Ovary (tissue), 10 donors: ENCODE measurements at regions of chr17 and their contacts with region 1.

Region 1: DNA sequence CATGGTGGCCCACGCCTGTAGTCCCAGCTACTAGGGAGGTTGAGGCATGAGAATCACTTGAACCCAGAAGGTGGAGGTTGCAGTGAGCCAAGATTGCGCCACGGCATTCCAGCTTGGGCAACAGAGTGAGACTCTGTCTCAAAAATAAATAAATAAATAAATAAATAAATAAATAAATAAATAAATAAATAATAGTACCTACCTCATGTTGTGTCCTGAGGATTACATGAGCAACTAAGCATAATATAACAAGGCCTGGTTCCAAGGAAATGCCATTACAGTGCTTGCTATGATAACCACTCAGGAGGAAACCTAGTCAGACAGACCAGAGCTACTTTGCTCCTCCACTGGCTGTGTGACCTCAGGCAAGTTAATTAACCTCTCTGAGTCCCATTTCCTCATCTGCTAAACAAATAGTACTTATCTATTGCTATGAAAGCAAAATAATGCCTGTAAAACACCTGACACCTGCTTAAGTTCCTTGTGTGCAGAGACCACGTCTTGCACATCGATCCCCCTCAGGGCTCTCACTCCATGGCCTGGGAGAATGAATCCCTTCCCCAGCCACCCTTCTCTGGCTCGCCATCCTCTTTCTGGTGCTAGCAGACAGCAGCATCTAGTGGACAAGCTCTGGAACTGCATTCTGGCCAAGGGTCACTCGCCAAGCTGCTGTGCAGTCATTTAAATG is 7.5 kb downstream of the EPOP start:
- DNase-seq: peak; percentile 51 to 65 (median 62)
- H3K4me3 ChIP-seq: no peak overlapping the region
- H3K27ac ChIP-seq: no peak overlapping the region
- H3K4me1 ChIP-seq: no peaks in the 10 kb centered on the region
- H3K27me3 ChIP-seq: no peaks in the 10 kb centered on the region
- CTCF ChIP-seq: peak; percentile 73 to 93 (median 91)
- EP300 ChIP-seq: no peak
- POLR2A ChIP-seq: no peak

Region 2: DNA sequence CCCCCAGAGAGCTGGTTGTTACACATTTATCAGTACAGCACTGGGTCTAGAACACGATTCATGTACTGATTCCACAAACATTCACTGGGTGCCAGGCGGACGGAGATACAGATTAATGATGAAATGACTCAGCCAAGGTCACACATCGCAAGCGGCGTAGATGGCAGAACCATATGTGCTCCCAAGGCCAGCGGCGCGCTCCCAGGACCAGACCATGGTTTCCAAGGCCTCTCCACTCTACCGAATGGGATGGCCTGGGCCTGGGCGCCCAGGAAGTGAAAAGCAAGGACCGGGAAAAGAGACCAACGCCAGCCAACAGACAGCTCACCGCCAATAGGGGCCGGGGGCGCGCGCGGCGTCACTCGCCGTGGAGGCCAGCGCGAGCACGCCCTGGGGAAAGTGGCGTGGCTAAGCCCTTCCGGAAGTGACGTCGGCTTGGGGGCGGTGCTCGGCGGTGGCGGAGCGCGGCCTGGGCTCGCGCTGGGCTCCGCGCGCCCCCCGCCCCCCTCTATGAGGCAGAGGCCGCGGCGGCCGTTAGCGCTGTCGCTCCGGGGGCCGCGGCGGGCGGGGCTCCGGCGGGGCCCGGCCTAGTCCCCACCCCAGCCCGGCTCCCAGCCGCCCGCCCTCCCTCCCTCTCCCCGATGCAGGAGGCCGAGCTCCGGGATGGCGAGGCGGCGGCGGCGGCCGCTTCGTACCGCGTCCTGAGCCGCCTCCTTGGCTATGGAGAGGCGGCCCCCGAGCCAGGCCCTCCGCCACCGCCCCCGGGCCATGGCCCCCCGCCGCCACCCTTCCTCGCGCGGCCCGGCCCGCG is 315.6 kb before region 1 on chr17 and contains the start of gene SOCS7:
- intact Hi-C with region 1: loop called in 1 of 4 experiments (anchors 10 kb)
- DNase-seq: peak; percentile 95 to 97 (median 97)
- H3K4me3 ChIP-seq: peak within 1 kb of the TSS; percentile 64
- H3K27ac ChIP-seq: peak within 1 kb of the TSS; percentile 40 to 75
- H3K4me1 ChIP-seq: peaks cover 11% of the 10 kb centered on the region
- H3K27me3 ChIP-seq: no peaks in the 10 kb centered on the region
- CTCF ChIP-seq: no peak
- EP300 ChIP-seq: no peak
- POLR2A ChIP-seq: peak; percentile 79
- total RNA-seq, gene SOCS7: 12.8 to 23.8 (median 21.1) TPM

Region 3: DNA sequence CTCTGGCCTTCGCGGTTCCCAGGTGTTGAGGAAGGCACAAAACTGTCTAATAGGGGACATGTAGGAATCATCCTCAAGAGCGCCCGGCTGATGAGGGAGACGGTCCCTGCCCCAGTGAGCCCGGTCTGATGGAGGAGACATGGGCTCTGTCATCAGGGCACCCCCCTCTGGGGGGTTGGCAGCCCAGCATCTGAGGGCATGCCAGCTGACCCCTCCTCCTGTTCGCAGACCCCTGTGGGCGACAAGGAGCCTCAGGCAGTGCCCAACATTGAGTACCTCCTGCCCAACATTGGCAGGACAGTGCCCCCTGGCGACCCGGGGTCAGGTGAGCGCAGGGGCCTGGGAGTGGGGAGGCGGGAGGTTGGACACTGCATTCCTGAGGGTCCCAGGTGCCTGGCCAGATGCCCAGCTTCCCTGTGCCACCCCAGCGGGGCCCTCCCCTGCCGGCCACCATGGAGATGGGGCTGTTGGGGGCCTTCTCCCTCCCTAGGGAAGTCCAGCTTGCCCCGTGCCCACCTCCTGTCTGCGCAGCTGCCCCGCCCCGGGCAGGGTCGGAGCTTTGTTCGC is 169.0 kb before region 1 on chr17:
- intact Hi-C with region 1: loop called in 3 of 4 experiments (anchors 10 kb)
- DNase-seq: peak in 1 of 5 donors; percentile 34
- H3K4me3 ChIP-seq: no peak overlapping the region
- H3K27ac ChIP-seq: no peak overlapping the region
- H3K4me1 ChIP-seq: no peaks in the 10 kb centered on the region
- H3K27me3 ChIP-seq: no peaks in the 10 kb centered on the region
- CTCF ChIP-seq: no peak
- EP300 ChIP-seq: no peak
- POLR2A ChIP-seq: no peak

Region 4: DNA sequence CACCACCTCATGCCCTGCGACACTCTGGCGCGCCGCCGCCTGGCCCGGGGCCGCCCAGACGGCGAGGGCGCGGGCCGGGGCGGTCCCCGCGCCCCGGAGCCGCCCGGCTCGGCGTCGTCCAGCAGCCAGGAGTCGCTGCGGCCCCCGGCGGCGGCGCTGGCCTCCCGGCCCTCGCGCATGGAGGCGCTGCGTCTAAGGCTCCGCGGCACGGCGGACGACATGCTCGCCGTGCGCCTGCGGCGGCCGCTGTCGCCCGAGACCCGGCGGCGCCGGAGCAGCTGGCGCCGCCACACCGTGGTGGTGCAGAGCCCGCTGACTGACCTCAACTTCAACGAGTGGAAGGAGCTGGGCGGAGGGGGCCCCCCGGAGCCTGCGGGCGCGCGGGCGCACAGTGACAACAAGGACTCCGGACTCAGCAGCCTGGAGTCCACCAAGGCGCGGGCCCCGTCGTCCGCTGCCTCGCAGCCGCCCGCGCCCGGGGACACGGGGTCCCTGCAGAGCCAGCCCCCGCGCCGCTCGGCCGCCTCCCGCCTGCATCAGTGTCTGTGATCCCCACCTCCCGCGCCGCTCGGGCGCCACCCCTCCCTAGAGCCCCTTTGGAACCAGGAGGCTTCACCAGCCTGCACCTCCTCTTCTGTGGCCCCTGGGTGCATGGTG is 156.7 kb before region 1 on chr17:
- intact Hi-C with region 1: loop called in 1 of 4 experiments (anchors 10 kb)
- DNase-seq: peak in 2 of 5 donors; percentile 54 to 56
- H3K4me3 ChIP-seq: no peak overlapping the region
- H3K27ac ChIP-seq: no peak overlapping the region
- H3K4me1 ChIP-seq: peaks cover 7% of the 10 kb centered on the region
- H3K27me3 ChIP-seq: no peaks in the 10 kb centered on the region
- CTCF ChIP-seq: no peak
- EP300 ChIP-seq: no peak
- POLR2A ChIP-seq: no peak

Region 5: GRCh38 chr17:38557836-38558727 is 109.2 kb before region 1 on chr17:
- intact Hi-C with region 1: loop called in 3 of 4 experiments (anchors 2 to 5 kb)
- DNase-seq: peak; percentile 91 to 96 (median 92)
- H3K4me3 ChIP-seq: peak overlapping the region; percentile 35
- H3K27ac ChIP-seq: peak overlapping the region; percentile 28 to 52
- H3K4me1 ChIP-seq: peaks cover 8% of the 10 kb centered on the region
- H3K27me3 ChIP-seq: peaks cover 3% of the 10 kb centered on the region
- CTCF ChIP-seq: peak; percentile 90 to 95 (median 95)
- EP300 ChIP-seq: no peak
- POLR2A ChIP-seq: peak; percentile 32

Region 6: DNA sequence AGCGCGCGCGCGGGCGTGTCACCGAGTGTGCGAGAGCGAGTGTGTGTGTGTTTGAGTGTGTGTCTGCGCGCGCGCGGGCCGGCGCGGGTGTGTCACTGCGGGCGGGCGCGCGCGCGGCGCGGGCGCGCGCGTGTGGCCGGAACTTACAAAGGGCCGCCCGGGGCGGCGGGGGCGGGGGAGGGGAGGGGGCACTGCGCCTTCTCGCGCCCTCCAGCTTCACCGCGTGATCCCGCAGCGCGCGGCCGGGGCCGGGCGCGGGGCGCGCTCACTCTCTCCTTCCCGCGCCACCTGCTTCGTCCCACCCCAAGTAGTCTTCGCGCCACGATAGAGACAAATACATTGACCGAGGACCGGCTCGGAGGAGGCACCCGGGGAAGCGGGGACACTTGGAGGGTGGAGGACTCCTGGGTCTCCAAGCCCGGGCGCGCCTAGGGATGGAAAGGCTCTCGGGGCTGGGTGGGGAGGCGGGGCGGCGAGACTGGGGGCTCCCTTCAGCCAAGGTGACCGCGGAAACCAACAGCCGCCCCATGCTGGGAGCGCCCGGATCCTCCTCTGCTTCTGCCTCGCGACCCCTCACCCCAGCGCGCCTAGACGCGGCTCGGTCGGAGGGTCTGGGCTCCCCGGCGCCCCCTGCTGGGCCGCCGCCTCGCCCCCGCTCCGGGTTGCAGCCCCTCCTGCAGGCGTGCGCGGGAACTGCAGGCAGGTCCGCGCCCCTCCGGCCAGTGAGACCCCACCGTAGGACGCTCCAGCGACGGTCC is 61.2 kb before region 1 on chr17 and contains the start of gene SRCIN1:
- intact Hi-C with region 1: loop called in 1 of 4 experiments (anchors 10 kb)
- DNase-seq: peak; percentile 24 to 74 (median 55)
- H3K4me3 ChIP-seq: peak within 1 kb of the TSS; percentile 41
- H3K27ac ChIP-seq: no peak within 1 kb of the TSS
- H3K4me1 ChIP-seq: peaks cover 6% of the 10 kb centered on the region
- H3K27me3 ChIP-seq: peaks cover 3% of the 10 kb centered on the region
- CTCF ChIP-seq: peak in 1 of 3 donors; percentile 29
- EP300 ChIP-seq: no peak
- POLR2A ChIP-seq: no peak
- total RNA-seq, gene SRCIN1: 0.48 to 3.0 (median 1.2) TPM

Region 7: DNA sequence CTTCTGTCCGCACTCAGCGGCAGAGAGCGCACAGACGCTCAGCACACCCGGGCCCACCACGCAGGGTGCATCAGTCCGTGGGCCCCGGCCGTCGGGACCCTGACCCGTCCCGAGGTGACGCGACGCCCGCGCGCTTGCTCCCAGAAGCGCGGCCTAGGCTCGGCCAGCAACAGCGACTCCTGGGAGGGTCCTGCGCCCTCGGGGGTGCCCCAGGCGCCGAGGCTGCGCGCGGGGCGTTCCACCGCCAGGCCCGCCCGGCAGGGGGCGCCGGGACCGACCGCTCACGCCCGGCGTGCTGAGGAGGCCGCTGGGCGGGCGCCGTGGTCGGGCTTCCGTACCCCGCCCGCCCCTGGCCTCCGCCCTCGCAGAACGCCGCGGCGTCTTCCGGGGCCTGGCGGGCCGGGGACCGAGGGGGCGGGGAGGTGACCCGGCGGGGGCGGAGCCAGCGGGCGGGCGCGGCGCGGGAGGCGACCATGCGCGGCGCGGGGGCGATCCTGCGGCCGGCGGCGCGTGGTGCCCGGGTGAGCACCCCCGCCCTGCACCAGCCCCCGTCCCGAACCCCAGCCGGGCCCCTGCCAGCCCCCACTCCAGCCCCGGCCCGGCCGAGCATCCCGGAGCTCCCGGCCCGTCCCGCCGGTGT is 62.8 kb after region 1 on chr17 and contains the start of gene CISD3:
- intact Hi-C with region 1: no loop called
- DNase-seq: peak; percentile 83 to 90 (median 88)
- H3K4me3 ChIP-seq: peak within 1 kb of the TSS; percentile 42
- H3K27ac ChIP-seq: peak within 1 kb of the TSS; percentile 70 to 74
- H3K4me1 ChIP-seq: peaks cover 6% of the 10 kb centered on the region
- H3K27me3 ChIP-seq: no peaks in the 10 kb centered on the region
- CTCF ChIP-seq: peak; percentile 47 to 98 (median 97)
- EP300 ChIP-seq: no peak
- POLR2A ChIP-seq: peak; percentile 19
- total RNA-seq, gene CISD3: 6.2 to 31.1 (median 24.4) TPM

Region 8: DNA sequence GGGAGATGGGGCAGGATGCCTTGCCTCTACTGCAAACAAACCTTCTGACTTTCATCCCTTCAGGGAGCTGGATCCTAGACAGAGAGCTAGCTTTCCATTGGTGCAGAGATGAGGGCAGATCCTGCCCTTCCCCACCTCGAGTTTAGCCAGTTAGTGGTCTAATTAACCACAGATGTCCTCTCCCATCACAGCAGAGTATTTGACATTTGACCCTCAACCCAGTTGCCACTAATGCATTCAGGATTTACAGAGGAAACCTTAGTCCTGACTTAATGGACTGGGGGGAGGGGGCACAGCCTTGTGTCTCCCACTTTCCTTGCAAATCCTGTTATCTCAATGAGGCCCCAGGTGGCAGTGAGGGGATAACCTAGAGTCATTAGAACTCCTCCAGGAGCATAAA is 121.9 kb after region 1 on chr17:
- intact Hi-C with region 1: no loop called
- DNase-seq: no peak
- H3K4me3 ChIP-seq: no peak overlapping the region
- H3K27ac ChIP-seq: no peak overlapping the region
- H3K4me1 ChIP-seq: peaks cover 2% of the 10 kb centered on the region
- H3K27me3 ChIP-seq: no peaks in the 10 kb centered on the region
- CTCF ChIP-seq: no peak
- EP300 ChIP-seq: no peak
- POLR2A ChIP-seq: no peak